Activated CD8-positive, alpha-beta memory T cell treated with anti-CD3 and anti-CD28 coated beads, Interleukin-2, amount 10 ng/mL, durations not matched to agents 7 days and 5 days (primary cell): ENCODE measurements at regions of chr15 and their contacts with region 1.

Region 1: GRCh38 chr15:67861983-67862382 is 22.1 kb upstream of the RNU6-1 start:
- DNase-seq: no peak
- ATAC-seq: no peak
- H3K4me3 Mint-ChIP-seq: no peak overlapping the region
- H3K27ac Mint-ChIP-seq: no peak overlapping the region
- H3K4me1 Mint-ChIP-seq: peaks cover 5% of the 10 kb centered on the region
- H3K27me3 Mint-ChIP-seq: peaks cover 24% of the 10 kb centered on the region

Region 2: DNA sequence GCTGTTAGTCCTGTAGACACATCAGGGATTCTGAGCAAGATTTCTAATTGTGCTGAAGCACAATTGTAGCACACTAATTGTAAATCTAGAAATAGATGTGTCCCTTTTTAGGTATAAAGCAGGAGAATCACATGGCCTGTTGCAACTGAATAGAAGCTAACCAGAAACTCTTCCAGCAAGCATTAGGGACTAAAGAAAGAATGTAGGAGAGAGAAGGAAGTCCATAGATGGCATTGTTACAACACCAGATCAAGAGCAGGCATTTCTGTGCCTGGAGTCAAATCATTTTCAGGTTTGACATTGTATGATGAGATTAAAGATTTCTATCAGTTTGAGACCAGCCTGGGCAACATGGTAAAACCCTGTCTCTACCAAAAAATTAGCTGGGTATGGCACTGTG is 315.8 kb after region 1 on chr15:
- CTCF ChIA-PET with region 1: no interaction called
- DNase-seq: no peak
- ATAC-seq: no peak
- H3K4me3 Mint-ChIP-seq: no peak overlapping the region
- H3K27ac Mint-ChIP-seq: no peak overlapping the region
- H3K4me1 Mint-ChIP-seq: no peaks in the 10 kb centered on the region
- H3K27me3 Mint-ChIP-seq: no peaks in the 10 kb centered on the region

Region 3: GRCh38 chr15:68192804-68193486 is 331.0 kb after region 1 on chr15:
- CTCF ChIA-PET with region 1: no interaction called
- DNase-seq: no peak
- ATAC-seq: no peak
- H3K4me3 Mint-ChIP-seq: no peak overlapping the region
- H3K27ac Mint-ChIP-seq: no peak overlapping the region
- H3K4me1 Mint-ChIP-seq: peaks cover 4% of the 10 kb centered on the region
- H3K27me3 Mint-ChIP-seq: no peaks in the 10 kb centered on the region

Region 4: GRCh38 chr15:68210821-68211655 is 349.1 kb after region 1 on chr15:
- CTCF ChIA-PET with region 1: interaction called, 10 read pairs
- DNase-seq: peak; percentile 60
- ATAC-seq: peak; percentile 50
- H3K4me3 Mint-ChIP-seq: no peak overlapping the region
- H3K27ac Mint-ChIP-seq: no peak overlapping the region
- H3K4me1 Mint-ChIP-seq: peaks cover 23% of the 10 kb centered on the region
- H3K27me3 Mint-ChIP-seq: no peaks in the 10 kb centered on the region